H1 (cell line): ENCODE measurements at regions of chr3 and their contacts with region 1.

Region 1: GRCh38 chr3:150227839-150228238 is 180.3 kb upstream of the TSC22D2 start:
- DNase-seq: peak; percentile 51 to 91
- H3K4me3 ChIP-seq: no peak overlapping the region
- H3K27ac ChIP-seq: 0 out of 2 replicates have a peak overlapping the region, but pooled peaks have one; percentile 16
- H3K4me1 ChIP-seq: peaks cover 0 to 3% (median 1%) of the 10 kb centered on the region in 4 experiments; a peak in 4 of 7 replicates
- H3K27me3 ChIP-seq: no peaks in the 10 kb centered on the region; a peak in 1 of 7 replicates
- CTCF ChIP-seq: peak; percentile 70 to 97 (median 80)
- EP300 ChIP-seq: no peak
- POLR2A ChIP-seq: no peak
- RAD21 ChIP-seq: peak; percentile 90 to 91

Region 2: GRCh38 chr3:150114873-150115540 is 112.8 kb before region 1 on chr3:
- CTCF ChIA-PET with region 1: no interaction called
- POLR2A ChIA-PET with region 1: no interaction called
- DNase-seq: no peak
- H3K4me3 ChIP-seq: no peak overlapping the region
- H3K27ac ChIP-seq: no peak overlapping the region
- H3K4me1 ChIP-seq: peaks cover 0 to 6% (median 1%) of the 10 kb centered on the region in 4 experiments; a peak in 4 of 7 replicates
- H3K27me3 ChIP-seq: no peaks in the 10 kb centered on the region
- CTCF ChIP-seq: no peak
- EP300 ChIP-seq: no peak
- POLR2A ChIP-seq: no peak
- RAD21 ChIP-seq: no peak

Region 3: DNA sequence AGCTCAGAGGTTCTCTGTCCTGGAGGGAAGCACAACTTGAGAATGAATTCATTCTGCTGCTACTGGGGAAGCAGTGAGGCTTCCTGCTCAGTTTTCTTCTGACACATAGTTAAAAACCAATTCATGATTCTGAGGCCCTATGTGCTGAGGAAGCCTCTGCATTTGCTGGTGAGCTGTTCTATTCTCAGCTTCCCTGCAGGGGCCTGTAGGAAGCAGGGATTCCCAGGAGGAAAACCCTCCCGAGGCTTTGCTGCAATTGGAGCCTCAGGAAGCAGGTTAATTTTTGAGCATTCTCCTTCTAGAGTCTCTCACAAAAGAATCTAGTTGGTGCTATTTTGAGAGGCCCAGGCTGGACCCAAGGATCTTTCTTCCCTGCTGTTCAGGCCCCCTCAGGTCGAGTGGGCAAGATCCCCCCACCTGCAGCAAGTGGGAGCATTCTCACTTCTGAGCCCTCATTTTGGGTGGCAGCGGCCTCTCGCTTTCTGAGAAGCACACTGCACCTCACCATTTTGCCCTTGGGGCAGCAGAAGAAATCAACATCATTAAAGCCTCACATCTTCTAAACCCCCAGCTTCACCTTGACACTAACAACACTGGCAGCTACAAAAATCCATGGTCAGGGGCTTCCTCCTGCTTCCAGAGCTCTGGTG is 17.3 kb before region 1 on chr3:
- CTCF ChIA-PET with region 1: interaction called, 18 read pairs
- POLR2A ChIA-PET with region 1: interaction called, 3 read pairs
- DNase-seq: peak in 1 of 2 experiments; percentile 47
- H3K4me3 ChIP-seq: no peak overlapping the region
- H3K27ac ChIP-seq: no peak overlapping the region; the same call in 1 of the 2 replicates
- H3K4me1 ChIP-seq: peaks cover 0 to 10% (median 4%) of the 10 kb centered on the region in 4 experiments; a peak in 5 of 7 replicates
- H3K27me3 ChIP-seq: no peaks in the 10 kb centered on the region
- CTCF ChIP-seq: no peak
- EP300 ChIP-seq: no peak
- POLR2A ChIP-seq: no peak
- RAD21 ChIP-seq: no peak; a peak in 1 of 4 replicates

Region 4: DNA sequence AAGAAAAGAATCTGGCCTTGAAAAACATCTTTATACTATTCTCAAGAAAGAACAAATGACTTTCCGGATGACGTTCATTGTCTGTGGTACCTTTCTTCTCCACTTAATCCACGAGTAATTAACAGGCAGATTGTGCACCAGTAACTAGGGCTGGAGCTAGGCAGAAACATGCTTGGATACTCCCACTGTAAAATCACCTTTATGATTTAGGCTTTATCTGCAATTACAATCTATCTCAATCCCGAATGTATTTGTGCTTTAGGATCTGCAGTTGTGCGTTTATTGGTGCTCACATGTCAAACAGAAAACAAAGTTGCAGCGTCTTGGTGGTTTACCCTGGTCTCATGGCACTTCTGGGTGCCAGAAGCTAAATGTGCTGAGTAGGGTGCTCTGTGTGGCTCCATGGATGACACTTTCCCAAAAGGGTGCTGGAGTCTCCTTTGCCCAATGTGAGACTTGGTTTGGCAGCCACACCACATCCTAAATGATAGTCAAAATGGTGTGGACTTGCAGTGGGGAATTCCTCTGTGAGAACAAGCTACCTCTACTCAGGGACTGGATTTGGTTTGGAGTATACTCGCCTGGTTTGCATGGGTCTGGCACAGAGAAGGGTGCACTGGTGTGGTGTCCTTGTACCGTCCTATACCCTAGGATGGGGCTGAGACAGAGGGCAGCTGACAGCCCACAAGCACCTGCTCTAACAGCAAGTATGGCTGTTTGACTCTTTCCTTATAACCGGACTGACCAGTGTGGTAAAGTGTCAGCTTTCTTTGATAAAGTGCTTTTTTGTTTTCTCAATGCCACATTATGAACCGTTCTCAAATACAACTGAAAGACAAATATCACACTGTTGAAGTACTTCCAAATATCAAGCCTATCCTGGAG is 310.7 kb after region 1 on chr3:
- CTCF ChIA-PET with region 1: interaction called, 10 read pairs
- POLR2A ChIA-PET with region 1: no interaction called
- DNase-seq: no peak
- H3K4me3 ChIP-seq: no peak overlapping the region
- H3K27ac ChIP-seq: no peak overlapping the region
- H3K4me1 ChIP-seq: no peaks in the 10 kb centered on the region
- H3K27me3 ChIP-seq: no peaks in the 10 kb centered on the region
- CTCF ChIP-seq: no peak
- EP300 ChIP-seq: no peak
- POLR2A ChIP-seq: peak in 1 of 2 experiments; percentile 27; a peak in 1 of 3 replicates
- RAD21 ChIP-seq: no peak